H1 (cell line): ENCODE measurements at regions of chr20 and their contacts with region 1.

Region 1: DNA sequence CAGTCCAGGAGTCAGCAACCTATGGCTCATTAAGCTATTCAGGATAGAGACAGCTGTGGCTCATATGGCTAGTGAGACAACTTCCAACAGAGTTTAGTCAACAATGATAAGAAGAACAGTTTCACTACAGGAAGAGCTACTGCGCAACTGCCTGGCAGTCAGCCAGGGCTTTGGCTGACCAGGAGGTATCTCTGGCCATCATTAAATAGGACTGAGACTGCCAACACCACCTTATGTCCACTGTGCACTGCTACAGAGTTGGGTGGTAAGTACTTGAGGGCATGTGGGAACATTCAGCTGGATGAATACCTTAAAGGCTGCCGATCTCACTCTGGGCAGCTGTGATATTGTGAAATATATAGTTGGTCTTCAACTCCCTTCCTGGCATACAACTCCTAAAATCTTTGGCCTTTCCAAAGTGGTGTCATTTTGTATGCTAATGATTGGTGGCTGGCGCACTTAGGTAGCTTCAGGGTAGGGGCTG is 52.2 kb upstream of the FAM83C start:
- DNase-seq: no peak
- H3K4me3 ChIP-seq: no peak overlapping the region
- H3K27ac ChIP-seq: no peak overlapping the region
- H3K4me1 ChIP-seq: no peaks in the 10 kb centered on the region
- H3K27me3 ChIP-seq: no peaks in the 10 kb centered on the region
- CTCF ChIP-seq: no peak
- EP300 ChIP-seq: no peak
- POLR2A ChIP-seq: no peak
- RAD21 ChIP-seq: no peak

Region 2: GRCh38 chr20:35252037-35252461 is 92.3 kb before region 1 on chr20:
- CTCF ChIA-PET with region 1: no interaction called
- POLR2A ChIA-PET with region 1: no interaction called
- DNase-seq: no peak
- H3K4me3 ChIP-seq: no peak overlapping the region
- H3K27ac ChIP-seq: no peak overlapping the region
- H3K4me1 ChIP-seq: 0 out of 7 replicates have a peak, but pooled peaks cover 0 to 2% (median 0%) of the 10 kb centered on the region in 4 experiments
- H3K27me3 ChIP-seq: no peaks in the 10 kb centered on the region
- CTCF ChIP-seq: no peak
- EP300 ChIP-seq: no peak
- POLR2A ChIP-seq: no peak
- RAD21 ChIP-seq: no peak

Region 3: GRCh38 chr20:35286077-35286898 is 58.1 kb before region 1 on chr20:
- CTCF ChIA-PET with region 1: no interaction called
- POLR2A ChIA-PET with region 1: no interaction called
- DNase-seq: no peak
- H3K4me3 ChIP-seq: no peak overlapping the region
- H3K27ac ChIP-seq: no peak overlapping the region
- H3K4me1 ChIP-seq: peaks cover 3 to 8% (median 5%) of the 10 kb centered on the region in 4 experiments; a peak in 6 of 7 replicates
- H3K27me3 ChIP-seq: no peaks in the 10 kb centered on the region
- CTCF ChIP-seq: no peak
- EP300 ChIP-seq: no peak
- POLR2A ChIP-seq: no peak
- RAD21 ChIP-seq: no peak

Region 4: GRCh38 chr20:35432430-35432735 is 88.0 kb after region 1 on chr20:
- CTCF ChIA-PET with region 1: interaction called, 32 read pairs
- POLR2A ChIA-PET with region 1: no interaction called
- DNase-seq: no peak
- H3K4me3 ChIP-seq: no peak overlapping the region
- H3K27ac ChIP-seq: no peak overlapping the region
- H3K4me1 ChIP-seq: peaks cover 5 to 22% (median 12%) of the 10 kb centered on the region in 4 experiments
- H3K27me3 ChIP-seq: no peaks in the 10 kb centered on the region
- CTCF ChIP-seq: peak; percentile 17 to 27 (median 22); a peak in 3 of 4 replicates
- EP300 ChIP-seq: no peak
- POLR2A ChIP-seq: no peak
- RAD21 ChIP-seq: peak in 1 of 2 experiments; percentile 27; a peak in 1 of 4 replicates

Region 5: DNA sequence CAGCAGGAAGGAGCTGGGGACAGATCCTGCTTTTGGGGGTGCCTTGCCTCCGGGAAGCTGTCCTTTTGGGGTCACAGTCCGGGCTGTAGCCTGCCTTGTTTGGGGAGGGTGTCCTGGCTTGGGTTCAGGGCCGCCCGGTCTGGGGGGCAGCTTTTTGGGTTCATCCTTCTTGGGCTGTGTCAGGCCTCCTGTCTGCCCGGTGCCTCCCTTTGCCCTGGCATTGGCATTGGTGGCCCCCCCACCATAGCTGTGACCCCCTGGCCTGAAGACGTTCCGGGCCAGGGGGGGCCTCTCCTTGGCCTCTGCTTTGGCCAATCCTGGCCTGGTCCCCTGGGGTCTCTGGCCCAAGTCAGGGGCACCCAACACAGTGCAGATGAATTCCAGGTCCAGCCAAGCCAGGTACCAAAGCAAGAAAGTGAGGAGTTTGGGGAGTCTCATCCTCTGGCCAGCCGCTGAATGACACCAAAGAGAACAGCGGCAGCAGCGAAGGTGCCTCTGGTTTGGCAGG is 93.1 kb after region 1 on chr20:
- CTCF ChIA-PET with region 1: interaction called, 32 read pairs
- POLR2A ChIA-PET with region 1: no interaction called
- DNase-seq: no peak
- H3K4me3 ChIP-seq: no peak overlapping the region
- H3K27ac ChIP-seq: no peak overlapping the region
- H3K4me1 ChIP-seq: peaks cover 5 to 21% (median 12%) of the 10 kb centered on the region in 4 experiments
- H3K27me3 ChIP-seq: no peaks in the 10 kb centered on the region
- CTCF ChIP-seq: no peak
- EP300 ChIP-seq: no peak
- POLR2A ChIP-seq: no peak
- RAD21 ChIP-seq: no peak

Region 6: GRCh38 chr20:35447082-35447789 is 102.8 kb after region 1 on chr20:
- CTCF ChIA-PET with region 1: interaction called, 15 read pairs
- POLR2A ChIA-PET with region 1: interaction called, 3 read pairs
- DNase-seq: peak; percentile 69 to 100
- H3K4me3 ChIP-seq: peak overlapping the region in 1 of 4 experiments; percentile 54; a peak in 3 of 8 replicates
- H3K27ac ChIP-seq: no peak overlapping the region
- H3K4me1 ChIP-seq: peaks cover 0 to 3% (median 0%) of the 10 kb centered on the region in 4 experiments; a peak in 1 of 7 replicates
- H3K27me3 ChIP-seq: no peaks in the 10 kb centered on the region
- CTCF ChIP-seq: peak; percentile 79 to 89 (median 87)
- EP300 ChIP-seq: no peak
- POLR2A ChIP-seq: no peak
- RAD21 ChIP-seq: peak; percentile 41 to 65